ENCODE measurements at regions of chr17 and their contacts with region 1.

Region 1: DNA sequence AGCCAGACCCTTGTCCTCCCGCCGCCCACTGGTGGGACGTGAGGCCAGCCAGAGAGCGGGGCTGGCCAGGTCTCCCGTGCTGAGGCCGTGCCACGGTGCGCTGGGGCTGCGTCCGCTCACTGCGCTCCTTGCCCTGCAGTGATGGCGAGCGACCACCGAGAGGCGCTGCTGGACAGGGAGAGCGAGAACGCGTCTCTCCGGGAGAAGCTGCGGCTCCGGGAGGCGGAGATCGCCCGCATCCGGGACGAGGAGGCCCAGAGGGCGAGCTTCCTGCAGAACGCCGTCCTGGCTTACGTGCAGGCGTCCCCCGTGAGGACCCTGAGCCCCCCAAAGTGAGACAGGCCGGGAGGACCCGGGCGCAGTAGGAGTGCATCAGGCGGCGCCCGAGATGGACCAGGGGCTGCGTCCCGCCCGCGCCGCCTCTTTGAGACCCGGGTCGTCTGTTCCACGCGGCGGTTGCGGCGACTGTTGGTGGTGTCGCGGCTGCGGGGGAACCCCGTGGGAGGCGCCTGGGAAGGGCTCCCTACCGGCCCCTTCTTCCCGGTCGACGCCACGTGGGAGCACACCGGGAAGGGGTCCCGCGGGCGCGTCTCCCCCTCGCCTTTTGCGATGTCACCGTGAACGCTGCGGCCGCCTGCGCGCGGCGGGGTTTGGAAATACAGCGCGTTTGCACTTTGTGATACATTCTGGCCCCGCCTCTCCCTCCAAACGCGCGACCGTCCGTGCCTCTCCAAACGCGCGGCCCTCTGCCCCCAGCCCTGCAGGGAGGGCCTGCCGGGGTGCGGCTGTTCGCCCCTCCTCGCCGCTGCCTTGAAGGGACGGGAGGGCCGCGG is 792 bp upstream of the RAC3 start:
- DNase-seq: peak; percentile 96
- H3K4me3 ChIP-seq: peak overlapping the region; percentile 50 to 62
- H3K27ac ChIP-seq: peak overlapping the region in 1 of 2 experiments; percentile 85; a peak in 2 of 4 replicates
- H3K4me1 ChIP-seq: peaks cover 0 to 18% of the 10 kb centered on the region in 2 experiments; a peak in 2 of 4 replicates
- H3K27me3 ChIP-seq: no peaks in the 10 kb centered on the region
- CTCF ChIP-seq: peak; percentile 69
- EP300 ChIP-seq: no peak
- RAD21 ChIP-seq: peak; percentile 96

Region 2: GRCh38 chr17:81871387-81872230 is 159.1 kb before region 1 on chr17:
- CTCF ChIA-PET with region 1: interaction called, 14 read pairs
- POLR2A ChIA-PET with region 1: no interaction called
- DNase-seq: peak; percentile 100
- H3K4me3 ChIP-seq: peak overlapping the region; percentile 82 to 83
- H3K27ac ChIP-seq: peak overlapping the region; percentile 95
- H3K4me1 ChIP-seq: peaks cover 24 to 40% of the 10 kb centered on the region in 2 experiments; a peak in 3 of 4 replicates
- H3K27me3 ChIP-seq: no peaks in the 10 kb centered on the region
- CTCF ChIP-seq: peak; percentile 37; the same call in 1 of the 2 replicates
- EP300 ChIP-seq: 0 out of 4 replicates have a peak, but pooled peaks of 1 of the 2 experiments have one; percentile 6
- RAD21 ChIP-seq: no peak

Region 3: DNA sequence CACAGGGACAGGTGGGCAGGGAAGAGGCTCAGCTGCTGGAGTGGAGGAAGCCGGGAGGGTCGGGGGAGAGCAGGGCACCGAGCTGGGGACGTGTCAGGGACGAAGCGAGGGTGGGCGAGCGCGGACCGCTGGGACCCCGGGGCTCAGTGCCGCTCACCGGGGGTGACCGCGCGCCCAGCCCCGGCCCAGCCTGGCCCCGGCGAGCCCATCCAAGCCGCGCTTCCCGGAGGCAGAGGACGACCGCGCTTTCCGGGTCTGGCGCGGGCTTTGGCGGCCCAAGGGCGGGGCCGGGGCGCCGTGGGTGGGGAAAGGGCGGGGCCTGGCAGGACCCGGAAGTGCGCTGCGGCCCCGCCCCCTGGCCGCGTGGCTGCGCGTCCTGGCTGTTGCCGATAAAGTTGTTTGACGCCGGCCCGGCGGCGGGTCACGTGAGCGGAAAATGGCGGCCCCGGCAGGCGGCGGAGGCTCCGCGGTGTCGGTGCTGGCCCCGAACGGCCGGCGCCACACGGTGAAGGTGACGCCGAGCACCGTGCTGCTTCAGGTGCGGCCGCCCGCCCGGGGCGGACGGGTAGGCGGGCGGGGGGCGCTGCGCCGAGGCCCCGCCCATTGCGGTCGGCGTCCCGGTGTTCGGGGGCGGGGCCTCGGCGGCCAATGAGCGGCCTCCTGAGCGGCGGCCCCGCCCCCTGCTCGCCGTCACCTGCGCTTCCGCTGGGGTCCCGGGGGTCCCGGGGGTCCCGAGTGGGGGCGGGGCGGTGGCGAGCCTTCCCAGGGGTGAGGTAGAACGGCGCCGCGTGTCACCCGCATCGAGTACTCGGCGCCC is 53.3 kb before region 1 on chr17 and contains the start of gene ASPSCR1:
- CTCF ChIA-PET with region 1: interaction called, 1,216 read pairs
- POLR2A ChIA-PET with region 1: interaction called, 3 read pairs
- DNase-seq: peak; percentile 99
- H3K4me3 ChIP-seq: peak within 1 kb of the TSS; percentile 69 to 95
- H3K27ac ChIP-seq: peak within 1 kb of the TSS; percentile 65 to 83
- H3K4me1 ChIP-seq: peaks cover 10 to 18% of the 10 kb centered on the region in 2 experiments; a peak in 2 of 4 replicates
- H3K27me3 ChIP-seq: no peaks in the 10 kb centered on the region
- CTCF ChIP-seq: no peak
- EP300 ChIP-seq: peak in 1 of 2 experiments; percentile 48; a peak in 2 of 4 replicates
- RAD21 ChIP-seq: no peak
- polyA plus RNA-seq, gene ASPSCR1: 27.5 and 36.2 TPM in 2 replicates

Region 4: GRCh38 chr17:82051776-82052637 is 21.3 kb after region 1 on chr17 and contains the starts of genes GPS1 and RFNG:
- CTCF ChIA-PET with region 1: interaction called, 45 read pairs
- POLR2A ChIA-PET with region 1: interaction called, 9 read pairs
- DNase-seq: peak; percentile 99
- H3K4me3 ChIP-seq: peak within 1 kb of the TSS; percentile 99 to 100
- H3K27ac ChIP-seq: peak within 1 kb of the TSS; percentile 37 to 74; a peak in 3 of 4 replicates
- H3K4me1 ChIP-seq: peaks cover 0 to 25% of the 10 kb centered on the region in 2 experiments; a peak in 2 of 4 replicates
- H3K27me3 ChIP-seq: no peaks in the 10 kb centered on the region
- CTCF ChIP-seq: no peak
- EP300 ChIP-seq: no peak; a peak in 1 of 4 replicates
- RAD21 ChIP-seq: no peak
- polyA plus RNA-seq, gene GPS1: 264 and 272 TPM in 2 replicates
- polyA plus RNA-seq, gene RFNG: 54.4 and 68.6 TPM in 2 replicates

Region 5: DNA sequence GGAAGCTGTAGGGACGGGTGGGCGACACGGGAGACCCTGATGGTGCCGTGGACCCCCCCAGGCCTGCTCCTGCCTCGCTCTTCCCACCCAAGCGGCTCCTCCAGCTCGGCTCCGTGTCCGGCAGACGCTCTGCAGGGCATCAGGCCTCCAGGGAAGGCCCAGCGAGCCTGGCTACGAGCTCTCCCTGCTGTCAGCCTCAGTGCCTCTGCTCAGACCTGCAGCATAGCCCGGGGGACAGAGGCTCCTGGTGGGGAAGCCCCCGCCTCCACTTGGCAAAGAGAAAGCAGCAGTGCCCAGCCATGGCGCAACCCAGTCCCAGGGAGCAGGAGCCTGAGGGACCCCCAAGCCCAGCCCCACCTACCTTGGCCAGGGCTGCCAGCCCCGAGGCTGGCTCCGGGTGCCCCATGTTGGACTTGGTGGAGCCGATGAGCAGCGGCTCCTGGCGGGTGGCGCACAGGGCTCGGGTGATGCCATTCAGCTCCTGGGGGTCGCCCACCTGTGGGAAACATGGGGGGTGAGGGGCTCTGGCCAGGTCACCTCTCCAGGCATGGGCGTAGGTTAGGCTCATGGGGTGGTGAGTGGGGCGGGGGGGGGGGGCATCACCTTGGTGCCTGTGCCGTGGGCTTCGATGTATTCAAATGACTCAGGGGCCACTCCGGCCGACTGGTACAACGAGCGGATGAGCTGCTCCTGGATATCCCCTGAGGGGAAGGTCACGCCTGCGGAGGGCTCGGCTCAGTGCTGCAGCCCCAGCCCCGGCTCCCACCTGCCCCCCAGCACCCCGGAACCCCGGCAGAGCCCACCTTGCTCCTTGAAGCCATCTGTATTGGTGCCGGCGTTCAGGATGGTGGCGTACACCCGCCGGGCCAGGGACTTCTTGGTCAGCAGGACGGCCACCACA is 61.7 kb after region 1 on chr17:
- CTCF ChIA-PET with region 1: interaction called, 22 read pairs
- POLR2A ChIA-PET with region 1: no interaction called
- DNase-seq: no peak
- H3K4me3 ChIP-seq: no peak overlapping the region
- H3K27ac ChIP-seq: no peak overlapping the region
- H3K4me1 ChIP-seq: peaks cover 10 to 13% of the 10 kb centered on the region in 2 experiments; a peak in 1 of 4 replicates
- H3K27me3 ChIP-seq: no peaks in the 10 kb centered on the region
- CTCF ChIP-seq: no peak
- EP300 ChIP-seq: no peak
- RAD21 ChIP-seq: no peak

Region 6: DNA sequence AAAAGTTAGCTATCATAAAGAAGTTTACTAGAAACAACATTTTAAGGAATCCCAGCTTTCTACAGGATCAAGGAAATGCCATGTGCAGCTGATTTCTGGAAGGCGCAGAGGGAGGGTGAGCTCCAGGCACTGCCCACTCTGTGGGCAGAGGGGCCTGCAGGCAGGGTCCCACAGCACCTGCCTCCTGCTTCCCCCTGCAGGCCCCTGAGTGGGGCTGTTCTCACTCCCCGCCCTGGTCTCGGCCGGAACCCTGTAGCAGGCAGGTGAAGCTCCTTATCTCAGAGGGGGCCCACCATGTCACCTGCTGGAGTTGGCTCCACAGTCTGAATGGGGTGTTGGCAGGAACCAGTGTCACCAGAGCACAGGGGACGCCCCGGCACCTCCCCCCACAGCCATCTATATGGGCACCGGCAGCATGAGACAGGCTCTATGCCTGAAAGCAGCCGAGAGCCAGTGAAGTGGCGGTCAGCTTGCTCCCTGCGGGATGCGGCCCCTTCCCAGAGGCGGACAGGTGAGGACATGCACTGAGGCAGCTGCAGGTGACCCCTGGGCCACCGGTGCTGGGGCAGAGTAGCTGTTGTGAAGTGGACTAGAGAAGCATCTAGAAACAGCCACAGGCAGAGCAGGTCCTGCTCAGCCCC is 115.0 kb after region 1 on chr17:
- CTCF ChIA-PET with region 1: interaction called, 16 read pairs
- POLR2A ChIA-PET with region 1: no interaction called
- DNase-seq: no peak
- H3K4me3 ChIP-seq: no peak overlapping the region
- H3K27ac ChIP-seq: no peak overlapping the region
- H3K4me1 ChIP-seq: no peaks in the 10 kb centered on the region
- H3K27me3 ChIP-seq: no peaks in the 10 kb centered on the region
- CTCF ChIP-seq: no peak
- EP300 ChIP-seq: no peak
- RAD21 ChIP-seq: no peak

Region 7: DNA sequence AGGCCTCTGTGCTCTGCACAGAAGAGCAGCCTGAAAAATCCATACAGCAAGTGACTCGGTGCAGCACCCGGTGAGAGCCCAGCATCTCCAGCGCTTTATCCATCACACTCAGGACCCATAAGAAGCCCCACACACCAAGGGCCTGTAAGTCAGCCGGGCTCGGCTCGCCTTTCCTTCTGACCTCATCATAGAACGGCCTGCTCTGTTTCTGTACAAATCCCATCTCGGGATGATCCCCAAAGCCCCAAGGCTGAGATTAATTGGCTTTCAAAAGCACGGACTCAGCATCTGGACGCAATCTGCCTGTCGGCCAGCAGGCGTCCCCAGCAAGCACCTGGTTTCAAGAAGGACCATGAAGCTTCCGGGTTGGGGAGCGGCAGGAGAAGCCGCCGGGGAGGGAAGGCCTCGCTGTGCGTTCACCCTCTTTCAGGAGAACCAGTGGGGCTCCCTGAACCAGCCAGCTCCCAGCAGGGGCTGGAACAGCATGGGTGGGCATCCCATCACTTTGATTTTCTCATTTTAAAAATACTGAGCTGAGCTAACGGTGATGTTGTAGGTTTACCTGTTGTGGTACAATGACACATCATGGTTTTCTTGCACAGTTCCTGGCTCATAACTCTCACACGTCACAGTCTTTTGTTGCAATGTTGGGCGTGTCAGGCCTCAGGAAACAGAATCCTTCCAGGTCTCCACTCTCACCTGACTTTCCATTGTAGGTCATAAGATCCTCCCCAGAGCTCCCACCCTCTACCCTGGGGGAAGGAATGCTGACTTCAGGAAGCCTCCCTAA is 175.2 kb after region 1 on chr17:
- CTCF ChIA-PET with region 1: interaction called, 12 read pairs
- POLR2A ChIA-PET with region 1: no interaction called
- DNase-seq: peak; percentile 92
- H3K4me3 ChIP-seq: peak overlapping the region in 1 of 2 experiments; percentile 8; a peak in 1 of 4 replicates
- H3K27ac ChIP-seq: peak overlapping the region; percentile 64 to 70
- H3K4me1 ChIP-seq: peaks cover 15 to 19% of the 10 kb centered on the region in 2 experiments; a peak in 3 of 4 replicates
- H3K27me3 ChIP-seq: no peaks in the 10 kb centered on the region
- CTCF ChIP-seq: peak; percentile 97
- EP300 ChIP-seq: no peak
- RAD21 ChIP-seq: peak; percentile 64

Measured in SK-N-SH (cell line).